SK-N-SH (cell line): ENCODE measurements at regions of chr1 and their contacts with region 1.

Region 1: GRCh38 chr1:113978863-113979702 is at the start of gene OLFML3:
- DNase-seq: peak; percentile 83
- H3K4me3 ChIP-seq: peak within 1 kb of the TSS; percentile 37 to 58
- H3K27ac ChIP-seq: peak within 1 kb of the TSS; percentile 96
- H3K4me1 ChIP-seq: peaks cover 37 to 57% of the 10 kb centered on the region in 2 experiments
- H3K27me3 ChIP-seq: no peaks in the 10 kb centered on the region
- CTCF ChIP-seq: peak; percentile 85
- EP300 ChIP-seq: peak; percentile 53 to 96
- RAD21 ChIP-seq: peak; percentile 75
- polyA plus RNA-seq, gene OLFML3: 26.1 and 28.3 TPM in 2 replicates

Region 2: DNA sequence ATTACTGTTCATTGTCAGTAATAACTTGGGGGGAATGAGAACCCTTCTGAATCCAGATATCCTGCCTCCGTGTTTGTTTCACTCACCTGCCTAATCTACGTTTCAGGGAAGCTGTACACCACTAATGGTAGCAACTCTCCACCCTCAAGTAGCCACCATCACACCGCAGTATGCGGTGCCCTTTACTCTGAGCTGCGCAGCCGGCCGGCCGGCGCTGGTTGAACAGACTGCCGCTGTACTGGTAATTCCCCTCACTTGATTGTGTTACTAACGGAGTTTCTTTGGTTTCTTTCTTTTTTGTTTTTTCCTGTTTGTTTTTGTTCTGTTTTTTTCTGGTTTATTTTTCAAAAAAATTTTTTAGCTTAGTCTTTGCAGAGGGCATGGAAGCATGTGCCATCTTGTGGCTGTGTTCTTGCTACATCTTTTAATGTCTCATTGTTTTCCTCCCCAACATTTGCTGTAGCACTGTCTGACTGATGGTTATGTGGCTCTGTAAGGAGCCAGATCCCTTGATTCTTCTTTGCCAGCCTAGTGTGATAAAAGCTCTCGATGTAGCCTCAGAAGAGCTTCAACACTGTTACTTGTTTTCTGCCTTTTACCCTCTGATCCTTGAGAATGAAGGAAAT is 15.7 kb before region 1 on chr1:
- CTCF ChIA-PET with region 1: interaction called, 12 read pairs
- POLR2A ChIA-PET with region 1: no interaction called
- DNase-seq: no peak
- H3K4me3 ChIP-seq: no peak overlapping the region
- H3K27ac ChIP-seq: no peak overlapping the region
- H3K4me1 ChIP-seq: no peaks in the 10 kb centered on the region
- H3K27me3 ChIP-seq: no peaks in the 10 kb centered on the region
- CTCF ChIP-seq: peak; percentile 27; the same call in 1 of the 2 replicates
- EP300 ChIP-seq: no peak
- RAD21 ChIP-seq: peak; percentile 38

Region 3: GRCh38 chr1:113998327-113998726 is 19.2 kb after region 1 on chr1:
- CTCF ChIA-PET with region 1: interaction called, 17 read pairs
- POLR2A ChIA-PET with region 1: no interaction called
- DNase-seq: peak; percentile 39
- H3K4me3 ChIP-seq: no peak overlapping the region
- H3K27ac ChIP-seq: no peak overlapping the region; a peak in 1 of 4 replicates
- H3K4me1 ChIP-seq: peaks cover 0 to 2% of the 10 kb centered on the region in 2 experiments; a peak in 1 of 4 replicates
- H3K27me3 ChIP-seq: no peaks in the 10 kb centered on the region; the same call in 1 of the 2 replicates
- CTCF ChIP-seq: no peak
- EP300 ChIP-seq: no peak
- RAD21 ChIP-seq: no peak

Region 4: DNA sequence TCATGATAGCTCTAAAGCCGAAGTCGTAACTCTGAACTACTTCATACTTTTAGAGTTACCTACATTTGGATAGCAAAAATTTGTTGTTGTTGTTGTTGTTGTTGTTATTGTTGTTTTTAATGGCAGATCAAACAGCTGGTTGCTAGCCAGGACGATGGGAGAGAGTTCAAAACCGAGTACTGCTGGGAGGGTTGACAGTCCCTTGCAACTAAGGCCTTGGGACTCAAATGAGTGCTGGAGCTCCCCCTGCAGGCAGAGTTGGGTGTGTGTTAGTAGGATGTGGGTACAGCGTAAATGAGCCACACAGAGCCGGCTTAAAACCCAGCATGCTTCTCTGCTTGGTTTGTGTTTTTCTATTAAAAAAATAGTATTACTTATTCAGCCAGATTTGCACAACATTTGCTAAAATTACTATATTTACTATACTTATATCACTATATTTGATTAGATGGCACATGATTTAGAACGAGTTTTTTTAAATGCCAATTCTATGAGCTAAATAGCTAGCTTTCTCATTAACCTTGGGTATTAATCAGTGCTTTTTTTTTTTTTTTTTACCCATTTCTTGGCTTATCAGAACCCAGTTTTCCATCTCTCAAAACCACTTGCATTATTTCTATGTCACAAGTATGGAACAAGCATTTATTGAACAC is 303.8 kb after region 1 on chr1:
- CTCF ChIA-PET with region 1: interaction called, 104 read pairs
- POLR2A ChIA-PET with region 1: no interaction called
- DNase-seq: peak; percentile 77
- H3K4me3 ChIP-seq: no peak overlapping the region
- H3K27ac ChIP-seq: no peak overlapping the region
- H3K4me1 ChIP-seq: peaks cover 0 to 10% of the 10 kb centered on the region in 2 experiments; a peak in 1 of 4 replicates
- H3K27me3 ChIP-seq: 0 out of 2 replicates have a peak, but pooled peaks cover 4% of the 10 kb centered on the region
- CTCF ChIP-seq: peak; percentile 93
- EP300 ChIP-seq: no peak
- RAD21 ChIP-seq: peak; percentile 88

Region 5: GRCh38 chr1:114355240-114355639 is 376.2 kb after region 1 on chr1:
- CTCF ChIA-PET with region 1: no interaction called
- POLR2A ChIA-PET with region 1: no interaction called
- DNase-seq: no peak
- H3K4me3 ChIP-seq: no peak overlapping the region
- H3K27ac ChIP-seq: no peak overlapping the region
- H3K4me1 ChIP-seq: peaks cover 0 to 7% of the 10 kb centered on the region in 2 experiments; a peak in 2 of 4 replicates
- H3K27me3 ChIP-seq: no peaks in the 10 kb centered on the region
- CTCF ChIP-seq: no peak
- EP300 ChIP-seq: no peak
- RAD21 ChIP-seq: no peak

Region 6: DNA sequence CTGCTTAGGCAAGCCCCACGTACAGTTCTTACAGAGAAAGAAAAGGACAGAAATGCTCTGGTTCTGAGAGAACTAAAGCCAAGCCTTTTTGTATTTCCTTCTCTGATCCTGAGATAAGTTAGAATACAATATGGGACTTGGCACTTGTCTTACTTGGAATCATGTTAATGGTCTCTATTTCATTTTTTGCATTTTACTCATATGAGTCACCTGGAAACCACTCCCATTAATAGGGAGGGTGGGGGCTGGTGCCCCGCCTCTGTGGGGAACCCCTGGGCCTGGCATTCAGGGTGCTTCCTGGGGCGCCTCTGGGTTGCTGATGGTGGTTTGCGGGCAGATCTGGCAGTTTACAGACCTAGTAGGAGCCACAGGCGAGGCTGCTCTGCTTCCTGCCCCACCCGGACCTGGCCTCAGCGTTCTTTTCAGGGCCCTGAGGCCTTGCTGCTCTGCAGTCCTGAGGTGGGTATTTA is 1083.5 kb after region 1 on chr1:
- CTCF ChIA-PET with region 1: no interaction called
- POLR2A ChIA-PET with region 1: no interaction called
- DNase-seq: no peak
- H3K4me3 ChIP-seq: no peak overlapping the region
- H3K27ac ChIP-seq: peak overlapping the region; percentile 26 to 87; a peak in 3 of 4 replicates
- H3K4me1 ChIP-seq: peaks cover 11 to 12% of the 10 kb centered on the region in 2 experiments; a peak in 2 of 4 replicates
- H3K27me3 ChIP-seq: no peaks in the 10 kb centered on the region
- CTCF ChIP-seq: no peak
- EP300 ChIP-seq: peak in 1 of 2 experiments; percentile 82; a peak in 1 of 4 replicates
- RAD21 ChIP-seq: no peak